Ovary (tissue), 10 donors: ENCODE measurements at regions of chr1 and their contacts with region 1.

Region 1: DNA sequence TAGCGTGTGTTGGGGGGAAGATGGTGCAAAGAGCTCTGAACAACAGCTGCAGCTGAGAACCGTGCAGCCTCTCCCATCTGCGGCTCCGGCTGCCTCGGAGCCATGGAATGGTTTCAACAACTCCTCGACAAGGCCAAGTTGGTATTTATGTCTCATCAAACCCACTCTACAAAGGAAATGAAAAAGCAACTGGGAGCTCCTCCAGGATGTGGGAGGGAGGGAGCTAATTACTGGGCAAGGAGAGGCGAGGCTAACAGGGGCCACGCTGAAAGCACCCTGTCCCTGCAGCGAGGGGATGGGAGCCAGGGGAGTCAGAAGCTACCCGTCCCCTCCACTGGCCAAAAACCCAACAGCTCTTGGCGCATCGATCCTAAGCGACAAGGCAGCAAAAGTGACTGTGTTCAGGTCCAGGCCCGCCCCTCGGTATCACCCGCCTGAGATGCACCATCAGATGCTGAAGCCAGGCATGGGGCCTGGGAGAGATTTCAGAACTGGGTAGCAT is 63.1 kb downstream of the ACOT7 start:
- DNase-seq: peak in 2 of 5 donors; percentile 45 to 50
- H3K4me3 ChIP-seq: no peak overlapping the region
- H3K27ac ChIP-seq: peak overlapping the region in 1 of 2 donors; percentile 53
- H3K4me1 ChIP-seq: peaks cover 18% of the 10 kb centered on the region
- H3K27me3 ChIP-seq: no peaks in the 10 kb centered on the region
- CTCF ChIP-seq: no peak
- EP300 ChIP-seq: no peak
- POLR2A ChIP-seq: no peak

Region 2: GRCh38 chr1:6041432-6042062 is 288.9 kb before region 1 on chr1:
- intact Hi-C with region 1: loop called in 1 of 4 experiments (anchors 10 kb)
- DNase-seq: peak; percentile 23 to 76 (median 45)
- H3K4me3 ChIP-seq: no peak overlapping the region
- H3K27ac ChIP-seq: no peak overlapping the region
- H3K4me1 ChIP-seq: peaks cover 3% of the 10 kb centered on the region
- H3K27me3 ChIP-seq: no peaks in the 10 kb centered on the region
- CTCF ChIP-seq: peak in 1 of 3 donors; percentile 14
- EP300 ChIP-seq: no peak
- POLR2A ChIP-seq: no peak